A673 (cell line): ENCODE measurements at regions of chr13 and their contacts with region 1.

Region 1: GRCh38 chr13:83943530-83944279 is 61.4 kb upstream of the SLITRK1 start:
- DNase-seq: peak; percentile 1
- H3K4me3 ChIP-seq: no peak overlapping the region
- H3K27ac ChIP-seq: no peak overlapping the region
- H3K4me1 ChIP-seq: no peaks in the 10 kb centered on the region
- H3K27me3 ChIP-seq: no peaks in the 10 kb centered on the region
- CTCF ChIP-seq: no peak

Region 2: GRCh38 chr13:84896128-84896527 is 952.4 kb after region 1 on chr13:
- CTCF ChIA-PET with region 1: no interaction called
- POLR2A ChIA-PET with region 1: interaction called, 10 read pairs
- intact Hi-C with region 1: no loop called
- DNase-seq: peak; percentile 77
- H3K4me3 ChIP-seq: no peak overlapping the region
- H3K27ac ChIP-seq: no peak overlapping the region
- H3K4me1 ChIP-seq: no peaks in the 10 kb centered on the region
- H3K27me3 ChIP-seq: no peaks in the 10 kb centered on the region
- CTCF ChIP-seq: peak; percentile 73